Activated CD4-positive, alpha-beta memory T cell treated with anti-CD3 and anti-CD28 coated beads for 36 hours (primary cell): ENCODE measurements at regions of chr3 and their contacts with region 1.

Region 1: GRCh38 chr3:122092460-122093165 is 37.5 kb downstream of the CD86 start:
- DNase-seq: peak; percentile 86
- H3K4me3 Mint-ChIP-seq: no peak overlapping the region
- H3K27ac Mint-ChIP-seq: peak overlapping the region; percentile 59
- H3K4me1 Mint-ChIP-seq: peaks cover 34% of the 10 kb centered on the region
- H3K27me3 Mint-ChIP-seq: no peaks in the 10 kb centered on the region

Region 2: GRCh38 chr3:121735047-121735696 is 357.4 kb before region 1 on chr3:
- CTCF ChIA-PET with region 1: no interaction called
- POLR2A ChIA-PET with region 1: no interaction called
- intact Hi-C with region 1: loop called (anchors 5 kb)
- DNase-seq: no peak
- H3K4me3 Mint-ChIP-seq: no peak overlapping the region
- H3K27ac Mint-ChIP-seq: peak overlapping the region; percentile 28
- H3K4me1 Mint-ChIP-seq: peaks cover 46% of the 10 kb centered on the region
- H3K27me3 Mint-ChIP-seq: no peaks in the 10 kb centered on the region

Region 3: GRCh38 chr3:121883507-121883906 is 209.1 kb before region 1 on chr3:
- CTCF ChIA-PET with region 1: no interaction called
- POLR2A ChIA-PET with region 1: no interaction called
- intact Hi-C with region 1: loop called (anchors 1 kb)
- DNase-seq: no peak
- H3K4me3 Mint-ChIP-seq: no peak overlapping the region
- H3K27ac Mint-ChIP-seq: no peak overlapping the region
- H3K4me1 Mint-ChIP-seq: peaks cover 2% of the 10 kb centered on the region
- H3K27me3 Mint-ChIP-seq: no peaks in the 10 kb centered on the region

Region 4: DNA sequence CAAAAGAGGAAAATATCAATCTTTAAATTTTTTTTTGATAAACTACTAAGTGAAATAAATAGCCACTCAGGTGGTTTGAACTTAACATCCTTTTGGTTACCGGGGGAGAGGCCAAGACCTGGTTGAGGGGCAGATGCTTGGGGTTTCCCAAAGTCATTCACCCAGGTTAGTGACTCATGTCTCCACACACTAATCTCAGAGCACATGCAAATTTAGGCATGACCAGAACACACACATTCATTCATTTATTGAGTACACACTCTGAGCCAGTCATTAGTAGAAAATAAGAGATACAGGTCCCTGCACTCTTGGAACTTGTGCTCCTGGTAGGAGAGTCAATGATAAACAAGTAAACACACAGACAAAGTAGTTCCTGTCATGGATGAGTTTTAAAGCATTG is 77.9 kb before region 1 on chr3:
- CTCF ChIA-PET with region 1: interaction called, 3 read pairs
- POLR2A ChIA-PET with region 1: no interaction called
- intact Hi-C with region 1: loop called (anchors 2 kb)
- DNase-seq: peak; percentile 58
- H3K4me3 Mint-ChIP-seq: no peak overlapping the region
- H3K27ac Mint-ChIP-seq: no peak overlapping the region
- H3K4me1 Mint-ChIP-seq: peaks cover 25% of the 10 kb centered on the region
- H3K27me3 Mint-ChIP-seq: peaks cover 27% of the 10 kb centered on the region

Region 5: GRCh38 chr3:122074621-122075265 is 17.9 kb before region 1 on chr3:
- CTCF ChIA-PET with region 1: interaction called, 3 read pairs
- POLR2A ChIA-PET with region 1: no interaction called
- intact Hi-C with region 1: loop called (anchors 2 kb)
- DNase-seq: peak; percentile 39
- H3K4me3 Mint-ChIP-seq: no peak overlapping the region
- H3K27ac Mint-ChIP-seq: peak overlapping the region; percentile 50
- H3K4me1 Mint-ChIP-seq: peaks cover 26% of the 10 kb centered on the region
- H3K27me3 Mint-ChIP-seq: peaks cover 19% of the 10 kb centered on the region